K562 (cell line): ENCODE measurements at regions of chrX and their contacts with region 1.

Region 1: DNA sequence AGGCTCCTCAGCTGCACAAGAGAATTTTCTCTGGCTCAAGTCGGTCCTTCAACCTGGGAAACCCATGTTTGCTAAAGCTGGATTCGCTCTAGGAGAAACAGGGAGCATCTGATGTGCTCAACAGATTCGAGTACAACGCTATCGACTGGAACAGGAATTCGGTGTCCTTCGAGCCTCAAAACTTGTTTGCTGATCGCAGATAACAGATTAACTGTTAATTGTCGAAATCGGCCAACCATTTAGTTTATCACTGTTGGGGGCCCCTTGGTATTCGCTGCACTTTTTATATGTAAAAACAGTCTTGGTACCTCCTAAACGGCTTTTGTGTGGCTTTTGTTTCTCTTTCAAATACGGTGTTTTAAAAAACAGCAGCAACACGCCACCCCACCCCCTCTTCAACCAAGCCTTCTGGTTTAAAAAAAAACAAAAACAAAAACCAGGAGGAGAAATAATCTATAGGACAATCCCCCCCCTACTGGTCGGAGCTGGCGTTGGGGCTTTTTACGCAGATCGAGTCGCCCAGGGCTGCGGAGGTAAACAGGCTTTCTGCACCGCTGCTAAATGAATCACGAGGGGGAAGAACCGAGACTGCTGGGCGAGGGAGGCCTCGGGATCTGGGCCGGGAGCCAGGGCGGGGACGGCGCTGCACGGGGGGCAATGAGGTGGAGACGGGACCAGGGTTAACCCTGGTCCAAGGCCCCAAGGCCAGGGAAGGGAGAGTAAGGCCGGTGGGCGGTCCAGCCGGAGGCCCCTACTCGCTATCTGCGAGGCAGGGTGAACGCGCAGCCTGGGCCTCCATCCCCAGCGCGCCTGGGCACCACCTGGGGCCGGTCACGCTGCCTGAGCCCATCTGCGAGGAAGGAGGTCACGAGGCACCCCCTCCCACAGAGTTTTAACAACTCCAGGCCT is 71.7 kb upstream of the BCOR start:
- DNase-seq: peak; percentile 58 to 87 (median 70)
- ATAC-seq: peak; percentile 60
- H3K4me3 ChIP-seq: no peak overlapping the region
- H3K27ac ChIP-seq: peak overlapping the region; percentile 74
- H3K4me1 ChIP-seq: peaks cover 45 to 70% of the 10 kb centered on the region in 2 experiments
- H3K27me3 ChIP-seq: no peaks in the 10 kb centered on the region
- CTCF ChIP-seq: peak; percentile 64 to 77 (median 75)
- EP300 ChIP-seq: peak; percentile 43
- POLR2A ChIP-seq: no peak
- RAD21 ChIP-seq: peak; percentile 55 to 57

Region 2: GRCh38 chrX:39814391-39814790 is 355.1 kb before region 1 on chrX:
- CTCF ChIA-PET with region 1: no interaction called
- POLR2A ChIA-PET with region 1: no interaction called
- in situ Hi-C with region 1: no loop called
- intact Hi-C with region 1: loop called (anchors 5 kb)
- DNase-seq: peak; percentile 34 to 53 (median 40)
- ATAC-seq: peak; percentile 56
- H3K4me3 ChIP-seq: no peak overlapping the region
- H3K27ac ChIP-seq: no peak overlapping the region
- H3K4me1 ChIP-seq: peaks cover 10 to 28% of the 10 kb centered on the region in 2 experiments
- H3K27me3 ChIP-seq: no peaks in the 10 kb centered on the region
- CTCF ChIP-seq: peak in 2 of 3 experiments; percentile 46 to 56; a peak in 3 of 6 replicates
- EP300 ChIP-seq: no peak
- POLR2A ChIP-seq: no peak
- RAD21 ChIP-seq: peak; percentile 29 to 68; a peak in 3 of 4 replicates

Region 3: GRCh38 chrX:40097497-40098263 is 71.8 kb before region 1 on chrX and contains the start of gene BCOR:
- CTCF ChIA-PET with region 1: no interaction called
- POLR2A ChIA-PET with region 1: interaction called, 16 read pairs
- in situ Hi-C with region 1: no loop called
- intact Hi-C with region 1: loop called (anchors 2 kb)
- DNase-seq: peak; percentile 58 to 89 (median 72)
- ATAC-seq: peak; percentile 27
- H3K4me3 ChIP-seq: peak within 1 kb of the TSS; percentile 70
- H3K27ac ChIP-seq: peak within 1 kb of the TSS; percentile 92
- H3K4me1 ChIP-seq: peaks cover 39 to 71% of the 10 kb centered on the region in 2 experiments
- H3K27me3 ChIP-seq: no peaks in the 10 kb centered on the region
- CTCF ChIP-seq: no peak
- EP300 ChIP-seq: no peak
- POLR2A ChIP-seq: peak; percentile 73
- RAD21 ChIP-seq: no peak; a peak in 1 of 4 replicates
- polyA plus RNA-seq, gene BCOR: 32.0 to 37.4 TPM

Region 4: DNA sequence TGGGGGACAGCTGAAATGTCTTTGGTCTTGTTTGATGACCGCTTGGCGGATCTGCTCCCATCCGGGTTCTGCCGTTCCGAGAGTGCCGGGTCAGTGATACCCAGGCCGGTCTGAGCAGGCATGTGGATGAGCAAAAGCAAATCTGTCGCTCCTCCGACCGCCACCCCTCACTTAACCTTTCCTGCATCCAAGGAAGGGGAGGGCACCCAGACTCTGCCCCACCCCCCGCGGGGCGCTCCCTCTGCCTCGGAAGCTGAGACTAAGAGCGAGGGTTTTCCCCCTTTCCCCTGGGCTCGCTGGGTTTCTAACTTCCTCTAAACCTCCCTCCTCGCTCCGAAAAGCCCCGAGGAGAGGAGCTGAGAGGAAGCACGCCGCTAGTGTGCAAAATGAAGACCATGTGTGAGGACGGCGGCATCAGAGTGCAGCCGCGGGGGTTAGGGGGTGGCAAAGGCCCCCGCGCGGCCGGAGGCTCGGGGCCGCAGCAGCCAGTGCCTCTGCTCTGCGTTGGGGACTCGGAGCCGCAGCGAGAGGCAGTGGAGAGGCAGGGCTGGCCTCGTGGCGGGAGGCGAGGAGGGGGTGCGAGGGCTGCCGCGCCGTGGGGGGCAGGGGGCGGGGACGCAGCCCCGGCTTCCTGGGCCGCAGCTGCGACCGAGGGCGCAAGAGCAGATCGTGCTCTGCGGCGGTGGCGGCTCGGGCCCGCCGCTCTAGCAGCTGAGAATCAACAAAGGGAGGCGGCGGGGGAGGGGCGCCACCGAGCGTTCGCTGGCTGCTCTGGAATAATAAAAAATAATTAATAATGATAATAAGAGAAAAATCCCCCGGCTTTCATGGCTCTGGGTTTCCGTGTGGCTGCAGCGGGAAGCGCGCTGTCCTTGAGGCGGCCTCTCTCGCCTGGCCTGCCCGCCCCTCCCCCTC is 15.9 kb before region 1 on chrX:
- CTCF ChIA-PET with region 1: no interaction called
- POLR2A ChIA-PET with region 1: interaction called, 10 read pairs
- in situ Hi-C with region 1: no loop called
- intact Hi-C with region 1: loop called (anchors 2 kb)
- DNase-seq: peak; percentile 64 to 75 (median 67)
- ATAC-seq: peak; percentile 37
- H3K4me3 ChIP-seq: peak overlapping the region; percentile 45
- H3K27ac ChIP-seq: peak overlapping the region; percentile 97
- H3K4me1 ChIP-seq: peaks cover 34 to 83% of the 10 kb centered on the region in 2 experiments
- H3K27me3 ChIP-seq: no peaks in the 10 kb centered on the region
- CTCF ChIP-seq: peak in 2 of 3 experiments; percentile 10 to 26; a peak in 2 of 6 replicates
- EP300 ChIP-seq: no peak
- POLR2A ChIP-seq: peak; percentile 55
- RAD21 ChIP-seq: no peak

Region 5: GRCh38 chrX:40468033-40468846 is 298.8 kb after region 1 on chrX:
- CTCF ChIA-PET with region 1: no interaction called
- POLR2A ChIA-PET with region 1: no interaction called
- in situ Hi-C with region 1: no loop called
- intact Hi-C with region 1: loop called (anchors 10 kb)
- DNase-seq: peak; percentile 48 to 54 (median 51)
- ATAC-seq: peak; percentile 91
- H3K4me3 ChIP-seq: no peak overlapping the region
- H3K27ac ChIP-seq: no peak overlapping the region
- H3K4me1 ChIP-seq: peaks cover 0 to 3% of the 10 kb centered on the region in 2 experiments; a peak in 1 of 5 replicates
- H3K27me3 ChIP-seq: no peaks in the 10 kb centered on the region
- CTCF ChIP-seq: peak; percentile 52 to 60 (median 59); a peak in 5 of 6 replicates
- EP300 ChIP-seq: no peak
- POLR2A ChIP-seq: no peak
- RAD21 ChIP-seq: peak; percentile 79 to 81